AG04449 (cell line): ENCODE measurements at regions of chr19 and their contacts with region 1.

Region 1: GRCh38 chr19:50556282-50557008 is 11.8 kb downstream of the LRRC4B start:
- DNase-seq: peak; percentile 3
- H3K4me3 ChIP-seq: peak overlapping the region; percentile 48
- CTCF ChIP-seq: peak; percentile 90

Region 2: GRCh38 chr19:50531118-50531612 is 25.3 kb before region 1 on chr19:
- CTCF ChIA-PET with region 1: interaction called, 11 read pairs
- POLR2A ChIA-PET with region 1: no interaction called
- DNase-seq: no peak
- H3K4me3 ChIP-seq: no peak overlapping the region
- CTCF ChIP-seq: no peak

Region 3: GRCh38 chr19:50537762-50538230 is 18.6 kb before region 1 on chr19:
- CTCF ChIA-PET with region 1: interaction called, 66 read pairs
- POLR2A ChIA-PET with region 1: no interaction called
- DNase-seq: peak; percentile 28
- H3K4me3 ChIP-seq: no peak overlapping the region
- CTCF ChIP-seq: peak; percentile 93

Region 4: GRCh38 chr19:50568321-50569075 is 12.1 kb after region 1 on chr19 and contains the start of gene LRRC4B:
- CTCF ChIA-PET with region 1: interaction called, 46 read pairs
- POLR2A ChIA-PET with region 1: no interaction called
- DNase-seq: no peak
- H3K4me3 ChIP-seq: no peak within 1 kb of the TSS
- CTCF ChIP-seq: no peak

Region 5: DNA sequence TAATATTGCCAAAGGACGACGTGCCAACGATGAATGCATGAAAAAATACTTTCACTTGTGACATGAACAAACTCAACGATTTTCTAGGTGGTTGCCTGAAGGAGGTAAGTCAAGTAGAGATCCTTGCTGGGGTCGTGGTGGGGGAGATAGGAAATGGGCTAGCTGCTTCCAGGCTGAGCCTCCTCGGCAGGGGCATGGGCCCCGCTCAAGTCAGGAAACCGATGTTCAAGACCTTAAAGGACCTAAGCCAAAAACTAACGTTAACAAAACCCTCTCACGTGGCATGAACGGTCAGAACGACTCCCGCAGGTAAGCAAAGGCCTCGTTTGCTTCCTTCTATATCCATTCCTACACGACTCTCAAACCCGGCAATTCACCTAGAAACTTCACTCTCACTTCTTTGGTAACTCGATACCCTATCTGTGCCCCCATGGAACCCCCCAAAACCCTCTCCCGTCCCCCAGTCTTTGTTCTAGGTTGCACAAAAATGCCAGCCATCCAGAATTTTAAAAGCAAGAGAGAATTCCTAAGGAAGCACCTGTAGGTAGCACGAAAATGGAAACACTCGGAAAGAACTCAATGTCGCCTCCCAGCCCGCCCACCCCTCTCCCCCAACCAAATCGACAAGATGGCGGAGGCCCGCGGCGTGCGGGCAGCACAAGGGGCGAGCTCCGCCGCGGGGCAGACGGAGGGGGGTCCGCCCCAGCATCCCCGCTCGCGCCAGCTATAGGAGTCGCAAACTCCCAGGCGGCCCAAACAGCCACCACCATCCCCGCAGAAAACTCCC is 247.4 kb after region 1 on chr19:
- CTCF ChIA-PET with region 1: no interaction called
- POLR2A ChIA-PET with region 1: no interaction called
- DNase-seq: no peak
- H3K4me3 ChIP-seq: peak overlapping the region; percentile 98
- CTCF ChIP-seq: no peak